OCI-LY7 (cell line): ENCODE measurements at regions of chr15 and their contacts with region 1.

Region 1: GRCh38 chr15:57122080-57122840 is 203.8 kb downstream of the TCF12 start:
- DNase-seq: no peak
- H3K4me3 ChIP-seq: no peak overlapping the region
- H3K27ac ChIP-seq: no peak overlapping the region
- H3K4me1 ChIP-seq: no peaks in the 10 kb centered on the region
- CTCF ChIP-seq: no peak

Region 2: GRCh38 chr15:57070651-57071050 is 51.6 kb before region 1 on chr15:
- CTCF ChIA-PET with region 1: no interaction called
- POLR2A ChIA-PET with region 1: no interaction called
- intact Hi-C with region 1: loop called (anchors 5 kb)
- DNase-seq: no peak
- H3K4me3 ChIP-seq: no peak overlapping the region
- H3K27ac ChIP-seq: no peak overlapping the region
- H3K4me1 ChIP-seq: no peaks in the 10 kb centered on the region
- CTCF ChIP-seq: no peak